A549 (cell line): ENCODE measurements at regions of chr17 and their contacts with region 1.

Region 1: DNA sequence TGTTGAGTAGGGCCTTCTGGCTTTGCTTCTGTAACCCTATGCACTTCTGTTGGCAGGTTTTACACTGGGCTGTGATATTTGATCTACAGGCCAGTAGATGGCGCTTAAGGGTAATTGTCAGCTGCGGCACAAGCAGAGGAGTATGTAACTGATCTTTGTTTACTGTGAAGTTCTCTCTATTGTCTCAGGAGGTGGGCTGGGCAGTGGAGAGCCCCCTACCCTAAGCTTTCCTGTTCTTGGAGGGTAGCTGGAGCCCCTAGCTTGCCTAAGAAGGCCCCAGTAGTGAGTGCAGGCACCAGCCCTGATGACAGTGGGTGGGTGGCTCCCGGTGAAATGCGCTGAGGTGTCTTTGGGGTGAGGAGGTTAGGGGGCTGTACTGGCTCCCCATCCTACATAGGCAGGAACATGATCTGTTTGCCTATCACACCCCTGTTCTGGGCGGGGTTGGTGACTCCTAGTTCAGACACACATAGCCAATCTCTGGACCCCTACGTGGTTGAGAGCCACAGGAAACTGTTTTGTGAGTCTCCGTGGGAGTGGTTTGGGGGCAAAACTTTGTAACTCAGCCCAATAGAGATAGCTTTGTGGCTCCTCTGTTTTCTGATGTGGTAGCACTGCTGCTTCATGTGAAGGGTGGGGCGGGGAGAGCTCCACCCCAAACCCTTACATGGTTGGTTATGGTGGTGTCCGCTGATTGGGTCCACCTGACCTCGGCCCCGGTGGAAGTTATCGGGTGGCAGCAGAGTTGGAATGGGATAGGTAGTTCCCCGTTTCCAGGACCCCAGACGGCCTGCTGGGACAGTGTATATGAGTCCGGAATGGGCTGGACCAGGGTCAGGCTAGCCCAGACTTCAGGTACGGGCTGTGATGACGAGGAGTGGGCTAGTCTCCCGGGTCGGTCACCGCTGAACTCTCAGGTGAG is 60.4 kb downstream of the SLFN11 start:
- DNase-seq: peak; percentile 69 to 77
- ATAC-seq: peak; percentile 96 to 98
- H3K4me3 ChIP-seq: no peak overlapping the region
- H3K27ac ChIP-seq: no peak overlapping the region
- H3K4me1 ChIP-seq: peaks cover 6% of the 10 kb centered on the region
- CTCF ChIP-seq: peak; percentile 89
- EP300 ChIP-seq: no peak
- POLR2A ChIP-seq: no peak
- RAD21 ChIP-seq: peak; percentile 90 to 94

Region 2: DNA sequence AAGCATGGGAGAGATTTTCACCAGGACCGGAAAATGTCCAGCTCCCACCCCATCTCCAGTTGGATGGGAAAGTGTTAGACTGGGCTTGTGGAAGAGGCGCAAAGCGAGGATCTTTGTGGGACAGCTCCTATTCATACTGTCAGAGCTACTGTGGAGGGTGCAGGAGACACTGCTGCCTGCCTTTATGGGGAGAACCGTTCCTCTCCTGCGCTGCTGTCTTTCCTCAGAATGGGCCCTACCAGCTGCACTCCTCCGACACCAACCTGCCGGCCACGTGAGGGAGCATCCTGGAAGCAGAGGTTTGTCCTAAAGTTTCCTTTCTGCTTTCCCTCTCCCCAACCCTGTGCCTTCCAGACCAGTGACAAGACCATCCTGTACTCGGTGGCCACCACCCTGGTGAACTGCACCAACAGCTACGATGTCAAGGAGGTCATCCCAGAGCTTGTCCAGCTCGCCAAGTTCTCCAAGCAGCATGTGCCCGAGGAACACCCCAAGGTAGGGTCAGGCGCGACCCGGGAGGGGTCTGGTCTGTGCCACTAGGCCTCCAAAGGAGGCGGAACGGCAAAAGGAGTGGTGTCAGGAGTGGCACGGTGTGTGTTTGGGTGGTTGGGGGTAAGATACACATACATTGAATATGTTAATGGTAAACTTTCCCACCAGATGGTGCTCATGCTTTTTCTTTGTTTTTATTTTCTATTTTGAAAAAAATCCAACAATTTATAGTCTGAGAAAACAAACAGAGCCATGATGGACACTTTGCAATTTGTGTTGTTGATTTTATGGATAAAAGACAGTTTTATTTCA is 141.9 kb before region 1 on chr17:
- CTCF ChIA-PET with region 1: interaction called, 45 read pairs
- POLR2A ChIA-PET with region 1: no interaction called
- DNase-seq: peak; percentile 37 to 49
- ATAC-seq: peak; percentile 67 to 79; a peak in 5 of 6 replicates
- H3K4me3 ChIP-seq: no peak overlapping the region
- H3K27ac ChIP-seq: no peak overlapping the region
- H3K4me1 ChIP-seq: peaks cover 6% of the 10 kb centered on the region; the same call in 2 of the 3 replicates
- CTCF ChIP-seq: peak; percentile 81
- EP300 ChIP-seq: no peak
- POLR2A ChIP-seq: no peak
- RAD21 ChIP-seq: peak; percentile 75 to 89

Region 3: DNA sequence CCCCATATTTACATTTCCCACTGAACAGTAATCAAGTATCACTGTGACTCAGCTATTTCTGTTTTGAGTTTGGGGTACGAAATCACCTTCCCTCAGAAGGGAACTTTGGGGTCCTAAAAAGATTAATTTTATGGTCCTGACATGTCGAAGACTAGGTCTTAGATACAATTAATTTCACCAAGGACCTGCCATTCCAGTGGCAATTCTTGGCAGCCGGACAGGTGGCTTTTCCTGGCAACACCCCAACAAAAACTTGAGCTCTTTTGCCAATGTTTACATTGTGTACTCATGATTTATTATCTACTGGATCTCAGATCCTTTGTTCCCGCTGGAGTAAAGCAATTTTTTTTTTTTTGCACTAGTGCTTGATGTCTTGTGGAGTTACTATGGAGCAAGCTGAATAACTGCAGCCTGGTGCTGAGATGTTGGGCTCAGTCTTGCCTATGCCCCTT is 55.8 kb before region 1 on chr17:
- CTCF ChIA-PET with region 1: interaction called, 18 read pairs
- POLR2A ChIA-PET with region 1: no interaction called
- DNase-seq: peak; percentile 51 to 89
- ATAC-seq: peak; percentile 51 to 70
- H3K4me3 ChIP-seq: no peak overlapping the region
- H3K27ac ChIP-seq: peak overlapping the region; percentile 66 to 76
- H3K4me1 ChIP-seq: peaks cover 45% of the 10 kb centered on the region
- CTCF ChIP-seq: no peak
- EP300 ChIP-seq: peak; percentile 45 to 59; a peak in 1 of 5 replicates
- POLR2A ChIP-seq: no peak
- RAD21 ChIP-seq: peak; percentile 12 to 23; a peak in 1 of 5 replicates

Region 4: DNA sequence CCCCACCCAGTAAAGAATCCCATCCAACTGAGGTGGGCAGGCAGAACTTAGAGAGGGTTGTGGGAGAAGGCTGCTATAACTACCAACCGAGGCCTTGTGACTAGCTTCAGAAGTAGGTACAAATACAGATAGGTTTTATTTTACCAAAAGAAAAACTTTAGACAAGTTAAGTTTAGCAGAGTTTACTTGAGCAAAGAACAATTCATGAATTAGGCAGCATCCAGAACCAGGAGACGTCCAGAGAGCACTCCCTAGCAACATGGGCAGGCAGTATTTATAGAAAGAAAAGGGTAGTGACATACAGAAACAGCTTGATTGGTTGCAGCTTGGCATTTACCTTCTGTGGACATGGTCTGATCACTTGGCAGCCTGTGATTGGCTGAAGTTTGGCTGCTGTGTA is 28.1 kb before region 1 on chr17:
- CTCF ChIA-PET with region 1: interaction called, 12 read pairs
- POLR2A ChIA-PET with region 1: no interaction called
- DNase-seq: no peak
- ATAC-seq: no peak
- H3K4me3 ChIP-seq: no peak overlapping the region
- H3K27ac ChIP-seq: no peak overlapping the region
- H3K4me1 ChIP-seq: no peaks in the 10 kb centered on the region
- CTCF ChIP-seq: no peak
- EP300 ChIP-seq: no peak
- POLR2A ChIP-seq: no peak
- RAD21 ChIP-seq: no peak

Region 5: DNA sequence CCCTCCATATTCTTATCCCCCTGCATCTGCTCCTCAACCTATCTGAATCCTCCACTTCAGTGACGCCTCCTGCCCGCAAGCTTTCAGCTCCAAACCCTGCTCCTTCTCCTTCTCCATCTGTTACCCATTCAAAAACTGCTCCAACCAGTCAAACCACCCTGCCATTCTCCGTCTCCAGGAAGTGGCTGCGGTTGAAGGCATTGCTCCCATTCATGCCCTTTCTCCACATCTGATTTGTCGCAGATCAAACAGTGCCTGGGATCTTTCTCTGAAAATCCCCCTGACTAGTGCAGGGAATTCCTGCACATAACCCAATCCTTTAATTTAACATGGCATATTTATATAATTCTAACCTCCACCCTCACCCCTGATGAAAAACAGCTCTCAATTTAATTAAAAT is 13.9 kb before region 1 on chr17:
- CTCF ChIA-PET with region 1: interaction called, 39 read pairs
- POLR2A ChIA-PET with region 1: no interaction called
- DNase-seq: no peak
- ATAC-seq: no peak
- H3K4me3 ChIP-seq: no peak overlapping the region
- H3K27ac ChIP-seq: no peak overlapping the region
- H3K4me1 ChIP-seq: no peaks in the 10 kb centered on the region
- CTCF ChIP-seq: no peak
- EP300 ChIP-seq: no peak
- POLR2A ChIP-seq: no peak
- RAD21 ChIP-seq: no peak

Region 6: GRCh38 chr17:35521150-35521549 is 208.1 kb after region 1 on chr17:
- CTCF ChIA-PET with region 1: interaction called, 13 read pairs
- POLR2A ChIA-PET with region 1: no interaction called
- DNase-seq: no peak
- ATAC-seq: no peak
- H3K4me3 ChIP-seq: no peak overlapping the region
- H3K27ac ChIP-seq: no peak overlapping the region
- H3K4me1 ChIP-seq: no peaks in the 10 kb centered on the region
- CTCF ChIP-seq: no peak
- EP300 ChIP-seq: no peak
- POLR2A ChIP-seq: no peak
- RAD21 ChIP-seq: no peak